PC-3 (cell line): ENCODE measurements at regions of chr2 and their contacts with region 1.

Region 1: GRCh38 chr2:52881606-52882005 is 886.0 kb upstream of the CHAC2 start:
- DNase-seq: peak; percentile 93
- ATAC-seq: peak; percentile 96
- H3K4me3 ChIP-seq: 0 out of 2 replicates have a peak overlapping the region, but pooled peaks have one; percentile 7
- H3K27ac ChIP-seq: peak overlapping the region; percentile 72
- H3K4me1 ChIP-seq: peaks cover 38% of the 10 kb centered on the region
- H3K27me3 ChIP-seq: no peaks in the 10 kb centered on the region
- CTCF ChIP-seq: no peak

Region 2: DNA sequence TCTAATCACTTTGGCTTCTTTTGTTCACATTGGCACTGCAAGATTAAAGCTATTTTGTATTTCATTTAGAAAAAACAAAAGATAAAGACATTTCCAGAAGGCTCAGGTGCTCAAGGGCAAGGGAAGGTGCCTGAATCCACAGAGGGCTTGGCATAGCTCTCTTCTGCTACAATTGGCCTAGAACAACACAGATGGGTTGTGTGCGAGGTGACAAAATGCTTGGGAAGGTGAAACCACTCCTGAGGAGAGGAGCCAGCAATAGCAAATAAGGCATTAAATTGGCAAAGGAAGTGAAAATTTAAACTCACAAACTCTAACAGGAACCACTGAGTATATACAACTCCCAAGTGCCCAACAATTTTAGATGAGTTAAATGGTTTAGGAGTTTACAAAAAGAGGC is 404.4 kb before region 1 on chr2:
- CTCF ChIA-PET with region 1: no interaction called
- POLR2A ChIA-PET with region 1: no interaction called
- intact Hi-C with region 1: no loop called
- DNase-seq: no peak
- ATAC-seq: no peak
- H3K4me3 ChIP-seq: no peak overlapping the region
- H3K27ac ChIP-seq: no peak overlapping the region
- H3K4me1 ChIP-seq: no peaks in the 10 kb centered on the region
- H3K27me3 ChIP-seq: no peaks in the 10 kb centered on the region
- CTCF ChIP-seq: no peak

Region 3: DNA sequence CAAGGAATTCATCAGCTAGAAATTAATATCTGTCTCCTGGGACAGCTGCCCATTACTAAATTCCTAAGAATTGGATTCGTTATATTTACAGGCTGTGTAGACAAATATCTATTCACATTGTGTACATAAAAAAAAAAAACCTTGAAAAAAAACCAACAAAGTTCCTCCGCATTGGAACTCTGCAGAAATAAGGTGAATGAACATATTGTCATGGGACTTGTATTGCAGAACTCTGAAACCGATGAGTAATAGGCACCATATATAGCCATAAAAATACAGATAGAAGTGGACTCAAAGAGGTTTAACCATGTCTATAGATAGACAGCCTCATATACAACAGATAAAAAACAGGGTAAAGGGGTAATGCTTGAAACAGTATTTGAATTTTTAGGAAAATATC is 23.9 kb before region 1 on chr2:
- CTCF ChIA-PET with region 1: no interaction called
- POLR2A ChIA-PET with region 1: interaction called, 5 read pairs
- intact Hi-C with region 1: loop called (anchors 2 kb)
- DNase-seq: peak; percentile 73
- ATAC-seq: peak; percentile 95
- H3K4me3 ChIP-seq: no peak overlapping the region
- H3K27ac ChIP-seq: no peak overlapping the region
- H3K4me1 ChIP-seq: peaks cover 13% of the 10 kb centered on the region
- H3K27me3 ChIP-seq: no peaks in the 10 kb centered on the region
- CTCF ChIP-seq: no peak